RWPE1 (cell line): ENCODE measurements at regions of chr16 and their contacts with region 1.

Region 1: GRCh38 chr16:56356276-56357240 is 68.8 kb downstream of the AMFR start:
- DNase-seq: peak; percentile 81
- H3K27ac ChIP-seq: peak overlapping the region; percentile 42
- CTCF ChIP-seq: peak; percentile 93

Region 2: GRCh38 chr16:56324406-56324805 is 32.2 kb before region 1 on chr16:
- CTCF ChIA-PET with region 1: interaction called, 53 read pairs
- POLR2A ChIA-PET with region 1: no interaction called
- DNase-seq: peak; percentile 87
- H3K27ac ChIP-seq: peak overlapping the region; percentile 66
- CTCF ChIP-seq: no peak

Region 3: DNA sequence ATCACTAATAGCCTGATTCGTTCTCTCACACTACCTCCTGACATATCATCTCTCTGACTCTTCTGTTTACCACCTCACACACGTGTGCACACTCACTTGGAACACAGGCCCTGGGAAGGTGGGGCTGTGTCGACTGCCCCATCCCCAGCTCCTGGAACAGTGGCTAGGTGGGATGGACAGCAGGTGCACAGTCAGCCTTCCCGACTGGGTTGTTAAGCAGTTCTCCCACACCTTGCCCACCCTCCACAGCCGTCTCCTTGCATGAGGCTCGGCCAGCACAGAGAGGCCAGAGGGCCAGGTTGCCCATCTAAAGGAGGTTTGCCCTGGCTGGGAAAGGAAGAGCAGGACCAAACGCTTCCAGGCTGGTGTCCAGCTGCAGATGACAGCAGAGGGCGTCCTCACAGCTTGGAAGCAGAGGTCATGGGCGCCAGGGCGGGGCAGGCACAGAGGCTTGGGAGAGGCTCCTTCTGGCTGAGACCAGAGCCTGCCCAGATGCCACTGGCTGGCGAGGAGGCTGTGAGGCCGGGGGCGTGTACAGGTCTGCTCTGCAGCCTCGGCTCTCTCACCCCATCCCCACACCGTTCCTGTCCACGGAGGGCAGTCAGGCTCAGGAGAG is 24.0 kb before region 1 on chr16:
- CTCF ChIA-PET with region 1: interaction called, 53 read pairs
- POLR2A ChIA-PET with region 1: no interaction called
- DNase-seq: peak; percentile 46
- H3K27ac ChIP-seq: no peak overlapping the region
- CTCF ChIP-seq: peak; percentile 24; the same call in 1 of the 2 replicates

Region 4: DNA sequence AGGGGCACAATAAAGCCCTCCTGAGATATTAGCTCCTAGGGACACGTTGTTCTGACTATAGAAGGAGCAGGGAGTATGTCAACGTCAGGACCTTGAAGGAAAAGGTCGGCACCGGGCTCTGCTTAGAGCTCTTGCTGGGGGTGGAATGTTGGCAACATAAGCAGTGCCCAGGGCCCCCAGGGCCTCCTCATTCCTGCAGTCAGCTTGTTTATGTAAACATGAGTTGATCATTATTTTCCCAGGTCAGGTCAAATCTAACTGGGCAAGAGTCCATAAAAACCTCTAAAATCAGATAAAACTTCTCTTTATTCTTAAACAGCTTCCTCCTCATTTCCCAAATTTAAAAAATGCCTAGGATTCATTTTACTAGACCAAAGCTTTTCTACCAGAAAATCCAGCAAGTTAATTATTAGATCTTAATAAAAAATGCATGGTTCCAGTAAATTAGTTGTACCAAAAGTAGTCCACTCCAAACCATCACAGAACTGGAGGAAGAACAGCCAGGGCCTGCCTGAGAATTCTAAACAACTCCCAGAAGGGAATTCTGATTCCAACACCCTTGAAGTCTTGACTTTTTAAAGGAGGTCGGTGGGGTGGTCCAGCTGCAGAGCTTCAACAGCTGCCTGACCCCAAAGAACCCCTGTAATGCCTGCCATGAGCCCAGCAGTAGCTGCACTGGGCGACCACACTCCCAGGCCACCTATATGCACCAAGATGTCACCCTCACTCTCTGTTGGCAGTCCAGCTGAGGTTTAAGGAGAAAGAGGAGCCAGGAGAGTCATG is 14.5 kb after region 1 on chr16:
- CTCF ChIA-PET with region 1: interaction called, 19 read pairs
- POLR2A ChIA-PET with region 1: no interaction called
- DNase-seq: no peak
- H3K27ac ChIP-seq: no peak overlapping the region
- CTCF ChIP-seq: no peak